ENCODE measurements at regions of chr9 and their contacts with region 1.

Region 1: DNA sequence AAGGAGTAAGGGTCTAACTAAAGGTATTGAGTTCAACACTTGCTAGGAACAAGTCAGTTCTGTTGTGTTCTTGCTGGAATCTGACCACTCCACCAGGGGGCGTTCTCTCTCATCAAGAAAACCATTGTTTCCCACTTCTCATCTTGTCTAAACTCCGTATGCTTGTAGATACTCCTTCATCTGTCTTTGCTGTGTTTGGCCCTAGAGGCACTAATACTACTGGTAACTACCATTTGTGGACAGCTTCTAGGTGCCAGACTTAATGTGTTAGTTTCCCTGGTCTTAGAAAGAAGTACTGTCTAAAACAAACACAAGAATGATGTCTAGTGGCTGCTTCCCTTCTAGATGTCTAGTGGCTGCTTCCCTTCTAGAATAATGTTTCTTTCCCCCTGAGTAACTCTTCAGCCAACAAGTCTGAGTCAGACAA is 18.7 kb upstream of the PTPDC1 start:
- DNase-seq: peak; percentile 46 to 83
- ATAC-seq: peak; percentile 74

Region 2: DNA sequence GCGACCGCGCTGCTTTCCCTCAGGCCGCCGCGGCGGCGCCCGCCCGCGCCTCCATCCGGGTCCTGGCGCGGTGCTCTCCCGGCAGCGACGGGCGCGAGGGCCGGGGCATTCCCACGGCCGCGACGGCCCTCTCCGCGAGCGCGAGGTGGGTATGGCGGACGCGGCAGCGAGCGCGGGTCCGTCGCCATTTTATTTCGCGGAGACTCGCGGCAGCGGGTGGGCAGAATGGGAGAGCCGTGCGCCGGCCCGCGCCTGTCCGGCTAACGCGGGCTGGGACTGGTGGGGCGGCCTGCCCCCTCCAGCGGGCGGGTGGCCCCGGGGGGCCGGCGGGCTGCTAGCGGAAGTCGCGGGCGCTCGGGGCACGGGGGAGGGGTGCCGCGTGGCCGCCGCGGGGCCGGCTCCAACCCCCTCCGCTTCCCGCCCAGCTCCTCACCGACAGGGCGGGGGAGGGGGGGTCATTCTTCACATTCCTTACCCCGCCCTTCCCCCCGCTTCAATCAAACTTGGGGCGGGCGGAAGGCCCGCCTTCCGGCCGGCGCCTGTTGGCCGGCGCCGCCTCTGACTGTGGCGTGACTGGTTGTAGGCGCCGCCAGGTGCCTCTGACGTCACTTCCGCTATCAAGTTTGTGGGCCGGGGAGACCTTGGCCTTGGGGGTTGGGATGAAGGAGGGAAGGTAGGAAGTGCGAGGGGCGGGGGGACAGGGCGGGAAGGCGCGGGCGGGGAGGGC is 100.9 kb after region 1 on chr9:
- intact Hi-C with region 1: no loop called
- DNase-seq: peak; percentile 98 to 99
- ATAC-seq: peak; percentile 75

Region 3: DNA sequence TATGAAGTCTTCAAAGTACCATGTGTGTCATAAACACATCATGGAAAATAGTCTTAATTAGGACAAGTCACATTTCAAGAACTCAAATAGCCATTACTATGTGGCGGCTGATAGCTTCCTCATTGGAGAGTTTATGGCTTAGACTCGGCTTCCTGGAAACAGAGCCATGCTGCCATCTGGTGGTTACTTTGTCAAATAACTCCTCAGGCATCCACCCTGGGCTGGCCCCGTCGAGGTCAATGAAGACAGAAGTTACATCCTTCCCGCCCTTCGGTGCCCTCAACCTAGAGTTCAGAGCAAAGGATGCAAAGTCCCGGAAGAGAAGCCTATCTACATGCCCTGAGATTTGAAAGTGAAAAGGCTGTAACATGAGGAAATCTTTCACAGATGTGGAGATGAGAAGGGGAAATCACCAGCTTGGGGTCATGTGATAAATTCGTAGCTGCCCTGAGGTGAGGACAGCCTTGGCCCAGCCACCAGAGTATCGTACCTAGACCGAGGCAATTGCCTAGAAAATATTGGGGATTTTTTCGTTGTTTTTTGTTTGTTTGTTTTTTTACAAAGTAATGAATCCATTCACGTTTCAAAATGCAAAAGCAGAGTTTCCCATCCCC is 148.1 kb after region 1 on chr9:
- intact Hi-C with region 1: loop called (anchors 2 to 5 kb)
- DNase-seq: peak; percentile 53 to 66
- ATAC-seq: peak; percentile 99